Activated CD4-positive, alpha-beta memory T cell treated with anti-CD3 and anti-CD28 coated beads, Interleukin-2, amount 10 ng/mL, durations not matched to agents 7 days and 5 days (primary cell): ENCODE measurements at regions of chr18 and their contacts with region 1.

Region 1: DNA sequence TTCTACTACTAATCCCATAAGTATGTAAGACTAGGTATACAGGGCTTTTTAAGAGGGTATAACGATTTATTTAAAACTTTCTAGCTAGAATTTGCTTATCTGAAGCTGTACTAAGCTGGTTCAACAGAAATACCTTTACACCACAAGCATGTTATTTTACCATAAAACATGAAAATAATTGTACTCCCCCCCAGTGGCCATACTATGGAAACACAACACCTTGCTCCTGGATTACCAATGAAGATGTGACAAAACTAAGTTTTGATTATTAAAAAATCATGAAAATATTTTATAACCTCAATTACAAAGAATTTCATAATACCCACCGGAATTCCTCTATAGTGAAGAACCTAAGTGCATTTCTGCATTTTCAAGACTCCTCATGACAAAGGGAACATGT is 27.3 kb downstream of the LPIN2 start:
- DNase-seq: no peak
- H3K4me3 Mint-ChIP-seq: no peak overlapping the region
- H3K27ac Mint-ChIP-seq: no peak overlapping the region
- H3K4me1 Mint-ChIP-seq: peaks cover 71% of the 10 kb centered on the region
- H3K27me3 Mint-ChIP-seq: no peaks in the 10 kb centered on the region

Region 2: DNA sequence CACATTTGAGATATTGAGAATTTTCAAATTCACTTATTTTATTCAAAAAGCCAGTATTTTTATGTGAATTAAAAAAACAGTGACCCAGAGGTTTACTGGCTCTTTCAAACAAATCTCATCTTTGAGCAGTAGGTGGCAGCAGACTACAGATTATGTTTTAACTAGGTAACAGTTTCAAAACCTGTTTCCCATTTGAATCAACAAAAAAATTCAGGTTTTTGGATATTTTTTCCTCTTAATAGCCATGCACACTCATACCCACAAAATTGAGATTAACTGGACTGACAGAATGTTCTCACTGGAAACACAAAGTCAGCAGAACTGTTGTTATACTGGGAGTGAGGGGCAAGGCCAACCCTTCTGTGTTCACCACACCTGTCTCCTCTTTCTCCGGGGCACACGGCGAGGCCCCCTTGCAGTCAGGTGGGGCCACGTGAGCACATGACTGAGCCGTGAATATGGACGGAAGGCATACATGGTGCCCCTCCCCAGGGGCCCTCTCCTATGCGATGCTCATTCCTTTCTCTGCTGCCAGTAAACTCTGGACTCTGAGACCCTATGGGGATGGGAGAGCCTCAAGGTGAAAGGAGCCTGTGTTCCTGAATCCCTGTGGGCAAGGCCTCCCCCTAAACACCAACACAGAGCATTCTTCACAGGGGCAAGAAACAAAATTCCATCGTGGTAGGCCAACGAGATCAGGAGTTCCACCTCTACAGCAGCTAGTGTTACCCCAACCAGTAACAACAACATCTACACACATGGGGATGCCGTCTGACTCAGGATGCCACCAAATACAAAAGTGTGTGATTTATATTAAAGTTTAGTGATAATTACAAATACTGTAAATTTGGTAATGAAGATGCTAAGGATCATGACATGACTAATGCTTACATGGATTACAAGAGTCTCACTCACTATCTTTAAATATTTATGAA is 53.1 kb before region 1 on chr18:
- CTCF ChIA-PET with region 1: interaction called, 81 read pairs
- POLR2A ChIA-PET with region 1: interaction called, 16 read pairs
- DNase-seq: peak; percentile 36
- H3K4me3 Mint-ChIP-seq: no peak overlapping the region
- H3K27ac Mint-ChIP-seq: peak overlapping the region; percentile 20
- H3K4me1 Mint-ChIP-seq: peaks cover 28% of the 10 kb centered on the region
- H3K27me3 Mint-ChIP-seq: no peaks in the 10 kb centered on the region

Region 3: GRCh38 chr18:2948038-2948437 is 37.6 kb before region 1 on chr18:
- CTCF ChIA-PET with region 1: interaction called, 20 read pairs
- POLR2A ChIA-PET with region 1: interaction called, 5 read pairs
- DNase-seq: no peak
- H3K4me3 Mint-ChIP-seq: no peak overlapping the region
- H3K27ac Mint-ChIP-seq: no peak overlapping the region
- H3K4me1 Mint-ChIP-seq: peaks cover 29% of the 10 kb centered on the region
- H3K27me3 Mint-ChIP-seq: no peaks in the 10 kb centered on the region

Region 4: GRCh38 chr18:2971741-2972552 is 13.7 kb before region 1 on chr18:
- CTCF ChIA-PET with region 1: interaction called, 31 read pairs
- POLR2A ChIA-PET with region 1: interaction called, 255 read pairs
- DNase-seq: peak; percentile 82
- H3K4me3 Mint-ChIP-seq: peak overlapping the region; percentile 69
- H3K27ac Mint-ChIP-seq: peak overlapping the region; percentile 94
- H3K4me1 Mint-ChIP-seq: peaks cover 83% of the 10 kb centered on the region
- H3K27me3 Mint-ChIP-seq: no peaks in the 10 kb centered on the region

Region 5: DNA sequence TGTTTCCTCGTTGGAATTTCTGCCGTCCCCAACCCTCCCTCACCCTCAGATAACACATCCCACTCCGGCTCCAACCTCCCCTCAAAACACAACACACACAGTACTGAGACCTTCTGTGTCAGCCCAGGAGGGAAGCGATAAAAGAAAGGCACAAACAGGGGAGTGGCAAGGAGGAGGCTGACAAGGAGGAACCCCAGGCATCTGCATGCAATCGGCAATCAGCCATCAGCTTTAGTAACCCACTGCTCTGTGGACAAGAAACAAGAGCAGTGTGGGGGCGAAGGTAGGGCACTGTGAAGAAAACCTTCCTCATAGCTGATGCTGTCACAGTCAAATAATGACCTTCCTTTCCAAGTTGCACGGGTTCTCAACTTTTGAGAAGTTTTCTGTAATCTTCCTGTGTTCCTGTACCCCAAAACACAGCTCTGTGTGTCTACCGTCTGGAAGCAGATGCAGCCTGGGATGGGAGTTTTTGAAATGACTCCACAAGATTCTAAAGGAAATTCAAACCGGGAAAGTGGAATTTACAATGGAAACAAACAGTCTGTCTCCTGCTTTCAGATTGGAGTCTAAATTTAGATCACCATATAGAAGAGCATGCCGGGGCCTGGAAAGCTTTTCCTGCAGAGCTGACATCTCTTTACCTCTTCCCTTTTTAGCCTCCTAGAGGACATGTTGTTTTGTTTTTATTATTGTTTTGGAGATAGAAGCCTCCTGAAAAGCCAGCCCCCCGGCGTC is 43.8 kb after region 1 on chr18:
- CTCF ChIA-PET with region 1: no interaction called
- POLR2A ChIA-PET with region 1: no interaction called
- DNase-seq: no peak
- H3K4me3 Mint-ChIP-seq: no peak overlapping the region
- H3K27ac Mint-ChIP-seq: no peak overlapping the region
- H3K4me1 Mint-ChIP-seq: no peaks in the 10 kb centered on the region
- H3K27me3 Mint-ChIP-seq: peaks cover 2% of the 10 kb centered on the region